ENCODE measurements at regions of chr20 and their contacts with region 1.

Region 1: GRCh38 chr20:22490287-22491193 is 93.8 kb downstream of the FOXA2 start:
- DNase-seq: peak; percentile 91 to 94
- ATAC-seq: peak; percentile 92 to 94
- H3K4me3 ChIP-seq: peak overlapping the region; percentile 24
- H3K27ac ChIP-seq: peak overlapping the region; percentile 78 to 85
- H3K4me1 ChIP-seq: peaks cover 33% of the 10 kb centered on the region
- CTCF ChIP-seq: peak; percentile 51
- EP300 ChIP-seq: peak in 1 of 2 experiments; percentile 31; a peak in 1 of 5 replicates
- POLR2A ChIP-seq: 0 out of 2 replicates have a peak, but pooled peaks have one; percentile 12
- RAD21 ChIP-seq: peak; percentile 62

Region 2: DNA sequence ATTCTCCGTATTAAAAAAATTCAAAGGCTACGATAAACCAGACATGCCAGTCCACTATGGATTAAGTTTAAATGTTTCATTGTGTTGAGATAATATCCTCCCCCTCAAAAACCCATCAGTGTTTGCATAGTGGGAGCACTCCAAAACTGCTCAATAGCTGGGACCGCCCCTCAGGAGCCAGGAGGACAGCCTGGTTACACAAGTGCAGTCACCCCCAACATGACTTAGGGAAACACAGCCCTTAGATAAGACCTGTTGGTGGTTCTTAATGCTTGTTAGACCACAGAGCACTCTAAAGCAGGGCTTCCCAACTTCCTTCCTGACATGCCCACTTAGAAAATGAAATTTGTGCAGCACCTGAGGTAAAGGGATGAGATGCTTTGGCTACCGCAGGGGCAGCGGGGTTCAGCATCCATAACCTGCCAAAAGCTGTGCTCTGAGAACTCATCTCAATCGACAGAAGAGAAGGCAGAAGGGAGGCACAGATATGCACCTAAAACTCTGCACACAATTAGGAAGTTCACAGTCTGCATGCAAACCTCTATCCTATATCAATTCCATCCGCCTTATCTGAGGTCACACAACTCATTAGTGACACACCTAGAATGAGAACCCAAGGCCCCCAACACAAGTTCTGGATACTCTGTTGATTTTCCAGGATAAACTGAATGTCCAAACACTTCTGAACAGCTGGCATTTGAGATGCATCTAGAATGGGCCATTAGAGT is 1852.4 kb before region 1 on chr20:
- CTCF ChIA-PET with region 1: no interaction called
- POLR2A ChIA-PET with region 1: no interaction called
- DNase-seq: no peak
- ATAC-seq: no peak
- H3K4me3 ChIP-seq: no peak overlapping the region
- H3K27ac ChIP-seq: no peak overlapping the region
- H3K4me1 ChIP-seq: no peaks in the 10 kb centered on the region
- CTCF ChIP-seq: no peak
- EP300 ChIP-seq: no peak
- POLR2A ChIP-seq: no peak
- RAD21 ChIP-seq: no peak

Region 3: GRCh38 chr20:22180244-22180643 is 310.3 kb before region 1 on chr20:
- CTCF ChIA-PET with region 1: no interaction called
- POLR2A ChIA-PET with region 1: no interaction called
- DNase-seq: peak; percentile 8 to 24
- ATAC-seq: peak in 1 of 2 experiments; percentile 51; a peak in 1 of 6 replicates
- H3K4me3 ChIP-seq: no peak overlapping the region
- H3K27ac ChIP-seq: no peak overlapping the region
- H3K4me1 ChIP-seq: no peaks in the 10 kb centered on the region
- CTCF ChIP-seq: peak; percentile 32; the same call in 2 of the 3 replicates
- EP300 ChIP-seq: no peak
- POLR2A ChIP-seq: no peak
- RAD21 ChIP-seq: no peak

Region 4: GRCh38 chr20:22403632-22404361 is 86.7 kb before region 1 on chr20:
- CTCF ChIA-PET with region 1: interaction called, 11 read pairs
- POLR2A ChIA-PET with region 1: no interaction called
- DNase-seq: peak in 1 of 2 experiments; percentile 92
- ATAC-seq: peak; percentile 62 to 78
- H3K4me3 ChIP-seq: peak overlapping the region; percentile 25
- H3K27ac ChIP-seq: peak overlapping the region; percentile 88 to 98
- H3K4me1 ChIP-seq: peaks cover 62% of the 10 kb centered on the region
- CTCF ChIP-seq: no peak; the same call in 2 of the 3 replicates
- EP300 ChIP-seq: peak; percentile 62 to 74; a peak in 2 of 5 replicates
- POLR2A ChIP-seq: no peak
- RAD21 ChIP-seq: peak in 1 of 2 experiments; percentile 9; a peak in 2 of 5 replicates

Region 5: DNA sequence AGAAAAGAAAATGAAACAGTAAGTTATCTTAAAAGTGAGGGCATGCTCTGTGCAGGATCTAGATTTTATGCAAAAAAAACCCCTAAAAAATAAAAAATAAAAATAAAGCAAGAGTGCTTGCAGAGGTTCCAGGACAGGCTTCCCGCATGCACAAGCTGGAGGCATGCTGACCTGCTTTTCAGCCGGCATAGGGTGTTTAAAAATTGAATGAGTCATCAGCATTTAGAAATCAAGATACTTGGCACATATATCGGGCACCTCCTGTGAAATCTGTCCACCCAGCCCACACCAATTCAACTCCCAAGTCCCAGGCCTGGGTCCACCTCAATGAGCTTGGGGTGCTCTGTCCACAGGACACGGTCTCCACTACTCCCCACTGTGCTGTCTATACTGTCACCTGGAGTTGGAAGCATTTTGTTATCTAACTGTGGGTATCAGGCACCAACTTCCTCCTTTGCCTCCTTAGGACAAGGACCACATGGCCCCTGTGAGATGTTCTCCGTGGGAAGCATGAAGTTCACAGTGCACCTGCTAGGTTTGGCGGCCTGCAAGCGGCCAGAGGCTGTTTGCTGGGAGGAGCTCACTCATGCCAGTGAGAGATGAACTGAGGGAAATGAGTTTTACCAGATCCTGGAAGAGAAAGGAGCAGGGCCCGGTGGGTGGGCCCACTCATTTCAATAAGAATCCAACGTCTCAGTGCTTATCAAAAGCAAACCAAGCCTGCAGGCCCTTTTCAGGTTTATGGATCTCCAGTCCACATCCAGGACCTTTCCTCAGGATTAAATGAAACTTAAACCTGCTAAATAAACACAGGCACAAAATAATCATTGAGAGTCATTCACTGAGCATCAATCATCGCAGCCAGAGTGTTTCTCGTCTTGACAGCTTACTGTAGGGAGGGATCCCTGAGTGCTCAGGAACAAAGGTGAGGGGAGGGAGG is 27.3 kb before region 1 on chr20:
- CTCF ChIA-PET with region 1: interaction called, 11 read pairs
- POLR2A ChIA-PET with region 1: no interaction called
- DNase-seq: peak in 1 of 2 experiments; percentile 48
- ATAC-seq: peak; percentile 60 to 71
- H3K4me3 ChIP-seq: no peak overlapping the region
- H3K27ac ChIP-seq: peak overlapping the region; percentile 78 to 86
- H3K4me1 ChIP-seq: peaks cover 51% of the 10 kb centered on the region
- CTCF ChIP-seq: no peak
- EP300 ChIP-seq: no peak; a peak in 1 of 5 replicates
- POLR2A ChIP-seq: no peak
- RAD21 ChIP-seq: no peak

Region 6: GRCh38 chr20:22511943-22512910 is 21.7 kb after region 1 on chr20:
- CTCF ChIA-PET with region 1: interaction called, 12 read pairs
- POLR2A ChIA-PET with region 1: no interaction called
- DNase-seq: peak in 1 of 2 experiments; percentile 42
- ATAC-seq: peak; percentile 80 to 87
- H3K4me3 ChIP-seq: no peak overlapping the region
- H3K27ac ChIP-seq: peak overlapping the region in 1 of 2 experiments; percentile 69; a peak in 4 of 6 replicates
- H3K4me1 ChIP-seq: peaks cover 18% of the 10 kb centered on the region
- CTCF ChIP-seq: no peak
- EP300 ChIP-seq: no peak
- POLR2A ChIP-seq: no peak
- RAD21 ChIP-seq: no peak

Region 7: DNA sequence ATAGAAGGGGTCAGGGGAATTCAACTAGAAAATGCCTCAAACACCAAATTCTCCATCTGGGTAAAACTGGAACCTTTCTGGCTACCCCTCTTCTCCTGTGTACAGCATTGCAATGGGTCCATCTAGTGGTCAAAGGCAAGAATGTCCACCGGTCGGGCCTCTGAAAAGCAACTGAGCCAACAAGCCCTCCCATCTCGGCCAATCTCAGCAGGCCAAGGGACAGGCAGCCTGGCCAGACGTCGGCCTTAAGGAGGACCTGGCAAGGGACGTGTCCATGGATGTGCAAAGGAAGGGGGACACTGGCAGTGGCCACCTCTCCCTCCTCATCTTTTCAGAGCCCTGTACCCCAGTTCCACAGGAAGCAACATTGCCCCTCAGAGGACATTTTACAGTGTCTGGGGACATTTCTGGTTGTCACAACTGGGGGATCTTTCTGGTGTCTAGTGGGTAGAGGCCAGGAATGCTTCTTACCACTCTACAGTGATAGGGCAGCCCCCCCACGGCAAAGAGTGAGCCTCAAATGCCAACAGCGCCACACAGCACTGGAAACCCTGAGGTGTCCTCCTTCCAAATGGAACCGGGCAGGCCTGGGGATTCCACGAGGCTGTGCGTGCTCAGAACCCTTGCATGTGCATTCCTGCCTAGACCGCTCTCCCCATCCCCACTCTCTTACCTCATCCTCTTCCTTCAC is 193.7 kb after region 1 on chr20:
- CTCF ChIA-PET with region 1: interaction called, 22 read pairs
- POLR2A ChIA-PET with region 1: no interaction called
- DNase-seq: peak; percentile 71 to 85
- ATAC-seq: peak; percentile 76 to 92
- H3K4me3 ChIP-seq: no peak overlapping the region
- H3K27ac ChIP-seq: peak overlapping the region; percentile 41 to 66; a peak in 5 of 6 replicates
- H3K4me1 ChIP-seq: peaks cover 30% of the 10 kb centered on the region
- CTCF ChIP-seq: peak; percentile 98
- EP300 ChIP-seq: no peak
- POLR2A ChIP-seq: no peak
- RAD21 ChIP-seq: peak; percentile 100

Measured in A549 (cell line).